ENCODE measurements at regions of chr2 and their contacts with region 1.

Region 1: DNA sequence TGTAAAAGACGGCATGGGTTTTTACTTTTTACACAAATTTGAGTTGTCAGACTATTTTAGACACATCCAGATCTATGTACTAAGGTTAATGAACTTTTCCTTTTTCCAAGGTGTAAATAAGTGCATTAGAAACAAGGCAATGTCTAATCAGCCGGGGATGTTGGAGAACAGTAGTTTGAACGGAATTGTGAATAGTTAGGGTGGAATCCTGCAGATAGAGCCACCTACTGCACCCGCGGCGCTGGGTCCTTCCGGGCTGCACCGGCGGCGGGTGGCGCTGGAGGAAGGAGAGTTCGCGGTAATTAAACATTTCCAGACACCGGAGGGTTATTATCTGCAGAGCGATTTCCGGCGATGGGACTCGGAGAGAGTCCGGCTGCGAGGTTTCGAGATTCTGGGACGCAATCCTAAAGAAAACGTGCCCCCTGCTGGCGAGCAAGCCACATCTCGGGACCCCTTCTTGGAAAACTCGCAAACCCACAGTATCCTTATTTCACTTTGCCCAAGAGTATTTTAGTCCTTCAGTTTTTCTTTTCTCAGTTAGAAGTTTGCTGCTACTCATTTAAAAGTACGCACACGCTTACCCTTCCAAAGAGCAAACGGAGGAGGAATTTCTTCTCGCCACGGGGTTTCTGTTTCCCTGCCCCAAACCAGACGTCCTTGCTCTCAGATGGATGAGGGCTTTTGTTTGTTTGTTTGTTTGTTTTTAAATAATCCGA is 4.5 kb upstream of the OSR1 start:
- DNase-seq: peak; percentile 85 to 93
- H3K4me3 ChIP-seq: peak overlapping the region; percentile 25
- H3K4me1 ChIP-seq: peaks cover 10% of the 10 kb centered on the region; the same call in 1 of the 2 replicates
- H3K27me3 ChIP-seq: peaks cover 20% of the 10 kb centered on the region

Region 2: GRCh38 chr2:18749912-18750526 is 612.9 kb before region 1 on chr2:
- in situ Hi-C with region 1: loop called (anchors 10 kb)
- DNase-seq: peak; percentile 45 to 77
- H3K4me3 ChIP-seq: no peak overlapping the region
- H3K4me1 ChIP-seq: no peaks in the 10 kb centered on the region
- H3K27me3 ChIP-seq: no peaks in the 10 kb centered on the region

Region 3: GRCh38 chr2:18883616-18884456 is 479.1 kb before region 1 on chr2:
- in situ Hi-C with region 1: loop called (anchors 25 kb)
- DNase-seq: peak in 1 of 2 experiments; percentile 29
- H3K4me3 ChIP-seq: no peak overlapping the region
- H3K4me1 ChIP-seq: no peaks in the 10 kb centered on the region
- H3K27me3 ChIP-seq: no peaks in the 10 kb centered on the region